Caco-2 (cell line): ENCODE measurements at regions of chr6 and their contacts with region 1.

Region 1: DNA sequence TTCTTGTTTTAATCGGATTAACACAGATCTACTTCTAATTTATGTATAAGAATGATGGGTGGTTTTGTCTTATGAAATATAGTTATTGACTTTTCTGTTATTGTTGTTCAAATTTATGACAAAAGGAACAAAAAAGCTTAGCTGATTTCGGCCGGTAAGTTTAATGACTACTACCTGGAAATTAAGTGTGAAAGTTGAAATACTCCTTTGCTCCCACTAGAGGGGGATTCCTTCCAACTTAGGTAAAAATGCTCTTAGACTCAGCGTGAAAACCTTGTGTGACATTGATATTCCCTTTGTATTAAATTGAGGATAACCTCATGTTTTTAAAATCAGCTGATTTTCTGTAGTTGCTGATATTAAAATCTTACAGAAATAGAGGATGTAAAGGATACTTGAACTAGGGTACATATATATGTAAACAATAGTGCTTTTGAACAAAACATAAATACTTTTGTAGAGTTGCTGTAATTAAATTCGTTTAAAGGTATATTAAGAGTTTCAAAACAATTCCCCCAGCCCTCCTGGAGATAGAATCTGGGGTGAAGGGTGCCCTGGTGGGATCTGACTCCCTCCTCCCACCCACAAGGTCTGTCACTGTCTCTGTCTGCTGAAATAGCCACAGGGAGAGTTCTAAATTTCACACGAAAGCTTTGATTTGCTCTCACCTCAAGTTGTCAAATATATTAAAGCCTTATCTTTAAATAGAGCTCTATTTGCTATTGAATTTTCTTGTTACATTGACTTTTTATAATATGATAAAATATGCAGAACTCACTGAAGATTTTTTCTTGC is 257.5 kb downstream of the ARID1B start:
- DNase-seq: peak in 1 of 2 experiments; percentile 16
- H3K4me3 ChIP-seq: no peak overlapping the region
- H3K4me3 Mint-ChIP-seq: no peak overlapping the region
- H3K27ac Mint-ChIP-seq: no peak overlapping the region
- H3K4me1 ChIP-seq: peaks cover 11% of the 10 kb centered on the region
- H3K4me1 Mint-ChIP-seq: no peaks in the 10 kb centered on the region
- H3K27me3 ChIP-seq: no peaks in the 10 kb centered on the region
- H3K27me3 Mint-ChIP-seq: no peaks in the 10 kb centered on the region
- CTCF ChIP-seq: peak; percentile 65 to 73

Region 2: GRCh38 chr6:157045831-157046454 is 11.3 kb after region 1 on chr6:
- CTCF ChIA-PET with region 1: interaction called, 12 read pairs
- POLR2A ChIA-PET with region 1: no interaction called
- intact Hi-C with region 1: loop called (anchors 1 kb)
- DNase-seq: peak in 1 of 2 experiments; percentile 13
- H3K4me3 ChIP-seq: no peak overlapping the region
- H3K4me3 Mint-ChIP-seq: no peak overlapping the region
- H3K27ac Mint-ChIP-seq: no peak overlapping the region
- H3K4me1 ChIP-seq: 0 out of 2 replicates have a peak, but pooled peaks cover 2% of the 10 kb centered on the region
- H3K4me1 Mint-ChIP-seq: no peaks in the 10 kb centered on the region
- H3K27me3 ChIP-seq: no peaks in the 10 kb centered on the region
- H3K27me3 Mint-ChIP-seq: no peaks in the 10 kb centered on the region
- CTCF ChIP-seq: peak; percentile 42 to 49

Region 3: GRCh38 chr6:157184202-157185020 is 149.8 kb after region 1 on chr6:
- CTCF ChIA-PET with region 1: interaction called, 5 read pairs
- POLR2A ChIA-PET with region 1: interaction called, 3 read pairs
- intact Hi-C with region 1: loop called (anchors 1 kb)
- DNase-seq: peak; percentile 57 to 78
- H3K4me3 ChIP-seq: no peak overlapping the region
- H3K4me3 Mint-ChIP-seq: no peak overlapping the region
- H3K27ac Mint-ChIP-seq: no peak overlapping the region
- H3K4me1 ChIP-seq: peaks cover 10% of the 10 kb centered on the region
- H3K4me1 Mint-ChIP-seq: peaks cover 12% of the 10 kb centered on the region
- H3K27me3 ChIP-seq: no peaks in the 10 kb centered on the region
- H3K27me3 Mint-ChIP-seq: no peaks in the 10 kb centered on the region
- CTCF ChIP-seq: peak; percentile 85 to 89

Region 4: DNA sequence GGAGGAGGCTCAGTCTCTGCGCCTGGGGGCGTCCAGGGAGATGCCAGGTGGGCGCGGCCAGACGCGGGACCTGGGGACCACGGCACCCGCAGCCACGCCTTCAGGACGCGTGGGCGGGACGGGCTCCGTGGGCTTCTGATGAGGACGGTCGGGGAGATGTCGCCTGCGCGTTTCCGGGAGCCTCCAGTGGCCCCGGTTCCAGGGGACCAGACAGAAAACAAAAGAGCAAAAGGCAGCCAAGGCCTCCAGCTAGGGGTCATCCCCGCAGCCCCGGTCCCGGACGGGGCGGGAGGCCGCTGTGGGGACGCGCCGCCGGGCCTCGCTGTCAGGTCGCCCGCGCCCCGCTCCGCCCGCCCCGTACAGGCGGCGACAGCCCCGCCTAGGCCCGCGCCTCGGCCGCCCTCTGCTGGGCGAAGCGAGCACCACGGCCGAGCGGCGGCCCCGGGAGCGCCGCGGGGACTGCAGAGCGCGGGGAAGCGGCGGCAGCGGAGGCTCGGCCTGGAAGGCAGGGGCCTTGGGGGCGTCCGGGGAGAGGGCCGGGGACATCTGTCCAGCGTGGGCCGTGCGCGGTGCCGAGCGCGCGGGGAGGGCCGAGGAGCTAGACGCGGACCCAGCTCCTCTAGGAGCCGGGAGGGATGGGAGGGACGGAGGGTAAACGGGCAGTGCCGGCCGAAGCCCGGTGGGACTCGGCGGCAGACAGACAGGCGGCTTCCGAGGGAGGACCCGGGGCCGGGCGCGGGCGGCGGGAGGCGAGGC is 240.0 kb after region 1 on chr6:
- CTCF ChIA-PET with region 1: no interaction called
- POLR2A ChIA-PET with region 1: no interaction called
- intact Hi-C with region 1: loop called (anchors 5 kb)
- DNase-seq: peak; percentile 49 to 89
- H3K4me3 ChIP-seq: peak overlapping the region; percentile 73
- H3K4me3 Mint-ChIP-seq: peak overlapping the region; percentile 79
- H3K27ac Mint-ChIP-seq: no peak overlapping the region
- H3K4me1 ChIP-seq: no peaks in the 10 kb centered on the region
- H3K4me1 Mint-ChIP-seq: no peaks in the 10 kb centered on the region
- H3K27me3 ChIP-seq: no peaks in the 10 kb centered on the region
- H3K27me3 Mint-ChIP-seq: no peaks in the 10 kb centered on the region
- CTCF ChIP-seq: peak; percentile 27 to 71